ENCODE measurements at regions of chr1 and their contacts with region 1.

Region 1: DNA sequence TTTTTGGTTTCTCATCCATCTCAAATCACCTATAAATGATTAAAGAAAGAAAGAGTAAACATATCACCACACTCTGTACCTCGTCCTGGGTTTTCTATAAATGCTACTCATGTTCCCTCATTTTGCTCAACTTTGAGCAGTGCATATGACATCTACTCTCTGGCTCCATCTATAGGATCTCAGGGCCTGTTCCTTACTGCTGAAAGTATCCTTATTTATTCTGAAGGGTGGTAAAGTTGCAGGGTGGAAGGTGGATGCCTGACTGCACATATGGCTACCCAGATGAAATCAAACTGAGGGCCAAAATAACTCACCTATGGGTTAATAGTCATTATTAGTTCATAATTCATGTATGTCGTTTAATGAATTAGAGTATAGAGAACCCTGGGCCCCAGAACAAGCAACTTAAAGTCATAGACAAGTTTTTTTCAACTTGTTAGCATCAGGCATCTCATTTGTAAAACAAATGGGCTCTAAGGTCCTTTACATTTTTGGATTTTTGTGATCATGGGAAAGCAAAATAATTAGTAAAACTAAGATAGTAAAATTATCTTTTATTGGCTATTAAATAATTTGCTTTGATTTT is 46.5 kb downstream of the NCF2 start:
- DNase-seq: no peak
- H3K4me3 Mint-ChIP-seq: no peak overlapping the region
- H3K27ac Mint-ChIP-seq: no peak overlapping the region
- H3K4me1 Mint-ChIP-seq: peaks cover 22% of the 10 kb centered on the region
- H3K27me3 Mint-ChIP-seq: no peaks in the 10 kb centered on the region

Region 2: GRCh38 chr1:183281553-183282091 is 262.1 kb before region 1 on chr1:
- intact Hi-C with region 1: loop called (anchors 1 kb)
- DNase-seq: peak; percentile 50
- H3K4me3 Mint-ChIP-seq: no peak overlapping the region
- H3K27ac Mint-ChIP-seq: no peak overlapping the region
- H3K4me1 Mint-ChIP-seq: peaks cover 6% of the 10 kb centered on the region
- H3K27me3 Mint-ChIP-seq: peaks cover 5% of the 10 kb centered on the region

Region 3: GRCh38 chr1:183685112-183685713 is 141.5 kb after region 1 on chr1:
- intact Hi-C with region 1: loop called (anchors 5 kb)
- DNase-seq: peak; percentile 11
- H3K4me3 Mint-ChIP-seq: no peak overlapping the region
- H3K27ac Mint-ChIP-seq: no peak overlapping the region
- H3K4me1 Mint-ChIP-seq: peaks cover 9% of the 10 kb centered on the region
- H3K27me3 Mint-ChIP-seq: peaks cover 19% of the 10 kb centered on the region

Measured in activated T-helper 1 cell treated with anti-CD3 and anti-CD28 coated beads, Interleukin-12 subunit alpha, Interleukin-12 subunit beta, Interleukin-2, Interleukin-4 antibody, amounts not matched to agents 30 ng/mL and 10 ng/mL and 1 ng/mL, durations not matched to agents 14 hours and 24 hours and 36 hours (primary cell).